Spleen (tissue), 13 donors: ENCODE measurements at regions of chr7 and their contacts with region 1.

Region 1: DNA sequence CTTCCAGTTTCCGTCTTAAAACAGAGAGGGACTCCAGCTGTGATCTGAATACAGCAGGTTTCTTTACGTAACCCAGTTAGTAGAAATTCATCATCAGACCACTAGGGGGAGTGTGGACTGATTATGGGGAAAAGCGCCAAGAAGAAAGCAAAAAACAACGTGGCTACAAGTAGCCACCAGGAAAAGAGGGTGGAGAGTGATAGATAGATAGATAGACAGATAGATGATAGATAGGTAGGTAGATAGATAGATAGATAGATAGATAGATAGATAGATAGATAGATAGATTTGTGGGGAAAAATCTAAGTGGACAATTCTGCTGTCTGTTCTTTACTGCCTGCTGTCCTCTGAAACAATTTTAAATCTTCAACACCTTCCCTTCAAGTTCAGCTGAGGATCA is 12.7 kb upstream of the AKR1B10 start:
- DNase-seq: no peak
- H3K4me3 ChIP-seq: no peak overlapping the region
- H3K27ac ChIP-seq: no peak overlapping the region
- H3K4me1 ChIP-seq: peaks cover 0 to 6% (median 0%) of the 10 kb centered on the region in 6 donors
- H3K27me3 ChIP-seq: peaks cover 0 to 16% (median 0%) of the 10 kb centered on the region in 7 donors
- CTCF ChIP-seq: peak; percentile 47 to 82 (median 78)
- POLR2A ChIP-seq: no peak

Region 2: DNA sequence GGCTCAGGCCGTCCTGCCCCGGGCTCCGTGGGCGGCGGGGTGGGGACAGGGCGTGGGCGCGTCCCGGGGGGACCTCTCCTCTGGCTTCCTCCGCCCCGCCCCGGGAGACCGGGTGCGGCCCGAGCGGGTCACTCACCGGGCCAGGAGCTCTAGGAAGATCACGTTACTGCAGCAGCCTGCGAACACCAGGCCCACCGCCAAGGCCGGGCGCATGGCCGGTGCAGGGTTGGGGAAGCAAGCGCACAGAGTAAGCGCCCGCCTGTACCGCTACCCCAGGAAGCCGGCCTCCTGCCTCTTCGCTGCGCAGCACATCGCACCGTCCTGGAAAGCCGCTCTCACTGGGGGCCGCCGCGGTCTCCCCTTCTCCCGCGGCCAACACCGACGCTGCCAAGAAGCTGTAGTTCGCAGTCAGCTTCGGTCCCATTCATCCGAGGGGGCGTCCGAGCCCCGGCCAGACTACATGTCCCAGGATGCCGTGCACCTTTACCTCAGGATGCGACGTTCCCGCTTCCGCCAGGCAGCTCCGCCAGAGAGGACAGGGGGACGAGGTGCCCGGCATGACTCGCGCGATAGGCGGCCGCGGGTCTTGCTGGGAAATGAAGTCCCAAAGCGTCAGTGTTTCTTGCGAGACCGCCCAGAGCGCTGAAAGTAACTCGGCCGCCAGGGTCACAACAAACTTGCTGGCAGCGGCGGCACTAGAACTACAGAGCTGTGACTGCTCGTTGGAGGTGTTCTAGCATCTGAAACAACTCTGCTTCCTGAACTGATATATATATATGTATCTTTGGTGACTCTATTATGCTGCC is 197.9 kb before region 1 on chr7 and contains the start of gene SLC35B4:
- intact Hi-C with region 1: no loop called
- DNase-seq: peak; percentile 99
- H3K4me3 ChIP-seq: peak within 1 kb of the TSS; percentile 78 to 96 (median 92)
- H3K27ac ChIP-seq: peak within 1 kb of the TSS; percentile 27 to 84 (median 80)
- H3K4me1 ChIP-seq: peaks cover 4 to 26% (median 14%) of the 10 kb centered on the region in 6 donors
- H3K27me3 ChIP-seq: no peaks in the 10 kb centered on the region
- CTCF ChIP-seq: peak; percentile 13 to 69 (median 41)
- POLR2A ChIP-seq: no peak
- total RNA-seq, gene SLC35B4: 10.8 to 19.0 (median 15.0) TPM

Region 3: GRCh38 chr7:134605973-134606923 is 91.6 kb after region 1 on chr7:
- intact Hi-C with region 1: loop called (anchors 10 kb)
- DNase-seq: peak; percentile 81
- H3K4me3 ChIP-seq: no peak overlapping the region
- H3K27ac ChIP-seq: no peak overlapping the region
- H3K4me1 ChIP-seq: peaks cover 0 to 31% (median 9%) of the 10 kb centered on the region in 6 donors
- H3K27me3 ChIP-seq: peaks cover 0 to 40% (median 0%) of the 10 kb centered on the region in 7 donors
- CTCF ChIP-seq: peak; percentile 57 to 91 (median 80)
- POLR2A ChIP-seq: no peak

Region 4: GRCh38 chr7:134686786-134687185 is 172.1 kb after region 1 on chr7:
- intact Hi-C with region 1: no loop called
- DNase-seq: no peak
- H3K4me3 ChIP-seq: no peak overlapping the region
- H3K27ac ChIP-seq: no peak overlapping the region
- H3K4me1 ChIP-seq: peaks cover 0 to 15% (median 0%) of the 10 kb centered on the region in 6 donors
- H3K27me3 ChIP-seq: peaks cover 0 to 9% (median 0%) of the 10 kb centered on the region in 7 donors
- CTCF ChIP-seq: peak in 3 of 11 experiments; percentile 8 to 24 (median 21)
- POLR2A ChIP-seq: no peak